Activated B cell treated with CpG ODN at 0.5 μM for 24 hours (primary cell): ENCODE measurements at regions of chr7 and their contacts with region 1.

Region 1: DNA sequence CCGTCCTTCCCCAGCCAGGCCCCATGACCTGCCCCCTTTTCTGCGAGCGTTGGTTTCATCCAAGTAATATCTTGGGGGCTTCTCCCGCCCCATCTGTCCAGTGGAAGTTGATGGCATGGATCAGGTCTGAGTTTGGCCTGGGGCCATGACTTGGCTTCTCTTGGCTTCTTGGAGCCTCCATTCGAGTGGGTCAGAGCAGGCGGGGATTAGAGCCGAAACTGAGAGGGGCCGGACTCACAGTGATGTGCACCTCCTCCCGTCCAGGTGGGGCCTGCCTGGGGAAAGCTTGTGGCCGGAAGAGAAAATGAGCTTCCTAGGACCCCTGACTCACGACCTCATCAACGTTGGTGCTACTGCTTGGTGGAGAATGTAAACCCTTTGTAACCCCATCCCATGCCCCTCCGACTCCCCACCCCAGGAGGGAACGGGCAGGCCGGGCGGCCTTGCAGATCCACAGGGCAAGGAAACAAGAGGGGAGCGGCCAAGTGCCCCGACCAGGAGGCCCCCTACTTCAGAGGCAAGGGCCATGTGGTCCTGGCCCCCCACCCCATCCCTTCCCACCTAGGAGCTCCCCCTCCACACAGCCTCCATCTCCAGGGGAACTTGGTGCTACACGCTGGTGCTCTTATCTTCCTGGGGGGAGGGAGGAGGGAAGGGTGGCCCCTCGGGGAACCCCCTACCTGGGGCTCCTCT is 15.1 kb upstream of the LIMK1 start:
- DNase-seq: no peak
- ATAC-seq: no peak
- H3K4me3 Mint-ChIP-seq: no peak overlapping the region
- H3K27ac Mint-ChIP-seq: no peak overlapping the region
- H3K4me1 Mint-ChIP-seq: peaks cover 2% of the 10 kb centered on the region
- H3K27me3 Mint-ChIP-seq: no peaks in the 10 kb centered on the region
- CTCF ChIP-seq: no peak

Region 2: GRCh38 chr7:74094224-74095101 is 25.9 kb after region 1 on chr7:
- CTCF ChIA-PET with region 1: interaction called, 3 read pairs
- POLR2A ChIA-PET with region 1: interaction called, 4 read pairs
- intact Hi-C with region 1: loop called (anchors 1 kb)
- DNase-seq: peak; percentile 46
- ATAC-seq: peak; percentile 72
- H3K4me3 Mint-ChIP-seq: peak overlapping the region; percentile 90
- H3K27ac Mint-ChIP-seq: peak overlapping the region; percentile 95
- H3K4me1 Mint-ChIP-seq: peaks cover 47% of the 10 kb centered on the region
- H3K27me3 Mint-ChIP-seq: no peaks in the 10 kb centered on the region
- CTCF ChIP-seq: no peak

Region 3: DNA sequence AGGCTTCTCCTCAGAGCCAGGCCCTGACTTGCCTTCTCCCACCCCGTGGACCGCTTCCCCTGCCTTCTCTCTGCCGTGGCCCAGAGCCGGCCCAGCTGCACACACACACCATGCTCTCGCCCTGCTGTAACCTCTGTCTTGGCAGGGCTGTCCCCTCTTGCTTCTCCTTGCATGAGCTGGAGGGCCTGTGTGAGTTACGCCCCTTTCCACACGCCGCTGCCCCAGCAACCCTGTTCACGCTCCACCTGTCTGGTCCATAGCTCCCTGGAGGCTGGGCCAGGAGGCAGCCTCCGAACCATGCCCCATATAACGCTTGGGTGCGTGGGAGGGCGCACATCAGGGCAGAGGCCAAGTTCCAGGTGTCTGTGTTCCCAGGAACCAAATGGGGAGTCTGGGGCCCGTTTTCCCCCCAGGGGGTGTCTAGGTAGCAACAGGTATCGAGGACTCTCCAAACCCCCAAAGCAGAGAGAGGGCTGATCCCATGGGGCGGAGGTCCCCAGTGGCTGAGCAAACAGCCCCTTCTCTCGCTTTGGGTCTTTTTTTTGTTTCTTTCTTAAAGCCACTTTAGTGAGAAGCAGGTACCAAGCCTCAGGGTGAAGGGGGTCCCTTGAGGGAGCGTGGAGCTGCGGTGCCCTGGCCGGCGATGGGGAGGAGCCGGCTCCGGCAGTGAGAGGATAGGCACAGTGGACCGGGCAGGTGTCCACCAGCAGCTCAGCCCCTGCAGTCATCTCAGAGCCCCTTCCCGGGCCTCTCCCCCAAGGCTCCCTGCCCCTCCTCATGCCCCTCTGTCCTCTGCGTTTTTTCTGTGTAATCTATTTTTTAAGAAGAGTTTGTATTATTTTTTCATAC is 53.1 kb after region 1 on chr7:
- CTCF ChIA-PET with region 1: no interaction called
- POLR2A ChIA-PET with region 1: no interaction called
- intact Hi-C with region 1: loop called (anchors 5 kb)
- DNase-seq: peak; percentile 23
- ATAC-seq: peak; percentile 82
- H3K4me3 Mint-ChIP-seq: no peak overlapping the region
- H3K27ac Mint-ChIP-seq: peak overlapping the region; percentile 79
- H3K4me1 Mint-ChIP-seq: peaks cover 4% of the 10 kb centered on the region
- H3K27me3 Mint-ChIP-seq: no peaks in the 10 kb centered on the region
- CTCF ChIP-seq: no peak

Region 4: DNA sequence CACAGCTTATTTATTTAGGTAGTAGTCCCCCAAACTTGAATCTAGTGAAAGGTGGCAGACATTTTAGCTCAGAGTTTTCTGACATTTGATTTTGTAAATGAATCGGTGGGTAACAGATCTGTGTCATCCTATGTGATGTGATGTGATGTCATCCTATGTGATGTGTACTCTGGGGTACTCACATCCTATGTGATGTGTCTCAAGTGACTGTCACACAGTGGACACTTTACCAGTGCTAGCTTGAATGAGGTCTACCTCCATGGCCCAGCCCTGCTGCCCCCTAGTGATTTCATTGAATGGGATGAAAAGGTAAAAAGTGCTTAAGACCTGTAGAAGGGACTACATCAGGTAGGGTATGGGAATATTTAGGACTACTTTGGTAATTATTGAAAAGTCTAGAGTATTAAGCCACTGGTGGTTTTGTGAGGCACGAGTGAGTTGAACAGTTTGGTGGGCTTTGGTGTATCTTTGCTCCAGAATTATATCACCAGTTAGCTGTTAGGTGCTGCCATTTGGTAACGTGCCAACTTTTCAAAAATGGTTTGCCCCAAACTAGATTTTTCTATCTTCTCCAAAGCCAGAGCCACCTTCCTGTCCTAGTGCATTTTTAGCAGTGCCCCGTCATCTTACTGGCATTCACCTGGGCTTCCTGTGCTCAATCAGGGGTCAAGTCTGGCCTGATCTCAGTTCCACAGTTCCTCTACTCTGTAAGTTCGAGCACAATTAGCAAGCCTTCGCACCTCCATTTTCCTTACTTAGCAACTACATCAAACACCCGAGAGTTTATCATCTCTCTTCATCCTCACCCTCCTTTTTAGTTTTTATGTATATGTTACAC is 115.3 kb after region 1 on chr7:
- CTCF ChIA-PET with region 1: interaction called, 21 read pairs
- POLR2A ChIA-PET with region 1: interaction called, 8 read pairs
- intact Hi-C with region 1: loop called (anchors 1 kb)
- DNase-seq: no peak
- ATAC-seq: peak; percentile 60
- H3K4me3 Mint-ChIP-seq: no peak overlapping the region
- H3K27ac Mint-ChIP-seq: peak overlapping the region; percentile 53
- H3K4me1 Mint-ChIP-seq: peaks cover 84% of the 10 kb centered on the region
- H3K27me3 Mint-ChIP-seq: no peaks in the 10 kb centered on the region
- CTCF ChIP-seq: no peak

Region 5: GRCh38 chr7:74569501-74570075 is 501.0 kb after region 1 on chr7:
- CTCF ChIA-PET with region 1: no interaction called
- POLR2A ChIA-PET with region 1: no interaction called
- intact Hi-C with region 1: loop called (anchors 5 kb)
- DNase-seq: no peak
- ATAC-seq: no peak
- H3K4me3 Mint-ChIP-seq: no peak overlapping the region
- H3K27ac Mint-ChIP-seq: no peak overlapping the region
- H3K4me1 Mint-ChIP-seq: peaks cover 3% of the 10 kb centered on the region
- H3K27me3 Mint-ChIP-seq: peaks cover 5% of the 10 kb centered on the region
- CTCF ChIP-seq: no peak